Activated CD4-positive, alpha-beta T cell treated with anti-CD3 and anti-CD28 coated beads, Interleukin-2, amount 10 ng/mL, durations not matched to agents 24 days and 14 days (primary cell): ENCODE measurements at regions of chr11 and their contacts with region 1.

Region 1: DNA sequence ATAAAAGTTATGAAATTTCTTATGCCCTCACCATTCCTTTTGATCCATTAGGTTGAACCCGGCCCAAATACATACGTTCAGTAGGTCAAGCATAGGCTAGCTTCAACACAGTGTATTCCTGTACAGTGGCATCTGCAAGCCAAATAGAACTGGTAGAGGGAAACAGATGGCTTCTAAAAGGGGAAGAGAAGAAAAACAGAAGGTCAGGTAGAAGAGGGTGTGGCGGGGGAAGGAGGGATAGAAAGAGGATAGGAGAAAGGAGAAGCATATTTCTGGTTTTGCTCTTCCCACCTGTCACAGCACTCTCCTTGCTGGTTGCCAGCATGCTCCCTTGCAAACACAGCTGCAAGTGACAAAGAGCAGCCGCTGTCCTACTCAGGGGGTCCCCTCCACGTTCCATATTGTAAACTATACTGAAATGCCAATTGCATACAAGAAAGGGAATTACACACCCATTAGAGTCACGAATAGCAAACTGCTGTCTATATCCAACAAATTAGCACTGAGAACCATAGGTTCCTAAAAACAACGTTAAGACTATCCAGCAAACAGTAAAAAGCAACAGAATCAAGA is 71.8 kb downstream of the PHF21A start:
- DNase-seq: no peak
- H3K4me3 Mint-ChIP-seq: no peak overlapping the region
- H3K27ac Mint-ChIP-seq: no peak overlapping the region
- H3K4me1 Mint-ChIP-seq: peaks cover 3% of the 10 kb centered on the region
- H3K27me3 Mint-ChIP-seq: no peaks in the 10 kb centered on the region

Region 2: DNA sequence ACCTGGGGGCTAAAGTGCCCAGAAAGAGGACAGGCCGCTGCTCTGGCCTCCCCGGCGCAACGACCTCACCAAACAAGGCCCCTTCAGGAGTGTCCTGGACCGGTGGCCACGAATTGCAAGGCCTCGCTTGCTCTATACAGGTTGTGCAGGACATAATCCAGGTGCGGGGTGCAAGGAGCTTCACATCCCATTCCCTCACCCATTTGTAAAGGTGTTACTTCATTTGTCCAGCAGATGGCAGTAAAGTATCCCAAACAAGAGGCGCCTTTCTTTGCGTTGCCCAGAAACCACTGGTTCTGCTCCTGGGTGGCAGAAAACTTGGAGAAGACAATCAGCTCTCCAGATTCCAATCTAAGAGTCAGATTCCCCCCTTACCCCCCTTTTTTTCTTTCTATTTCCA is 938.8 kb before region 1 on chr11:
- intact Hi-C with region 1: no loop called
- DNase-seq: peak; percentile 86
- H3K4me3 Mint-ChIP-seq: no peak overlapping the region
- H3K27ac Mint-ChIP-seq: no peak overlapping the region
- H3K4me1 Mint-ChIP-seq: no peaks in the 10 kb centered on the region
- H3K27me3 Mint-ChIP-seq: peaks cover 24% of the 10 kb centered on the region

Region 3: GRCh38 chr11:46026606-46027293 is 22.7 kb before region 1 on chr11:
- intact Hi-C with region 1: no loop called
- DNase-seq: no peak
- H3K4me3 Mint-ChIP-seq: no peak overlapping the region
- H3K27ac Mint-ChIP-seq: no peak overlapping the region
- H3K4me1 Mint-ChIP-seq: no peaks in the 10 kb centered on the region
- H3K27me3 Mint-ChIP-seq: no peaks in the 10 kb centered on the region

Region 4: DNA sequence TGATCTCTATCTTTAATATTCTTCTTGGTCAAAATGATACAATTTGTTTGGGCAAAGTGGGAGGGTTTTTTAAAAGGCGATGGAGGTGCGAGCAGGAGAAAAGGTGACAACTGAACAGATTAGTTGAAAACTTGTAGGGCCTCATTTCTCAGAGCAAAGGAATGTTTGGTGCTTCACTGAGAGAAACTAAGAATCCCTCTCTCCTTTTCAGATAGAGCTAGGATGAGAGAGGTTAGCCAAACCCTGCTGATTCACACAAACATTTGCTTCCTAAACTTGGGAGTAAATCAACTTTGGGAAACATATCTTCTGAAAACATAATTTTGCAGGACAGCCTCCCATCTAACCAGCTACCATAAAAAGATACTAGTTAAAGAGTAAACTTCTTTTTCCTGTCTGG is 14.8 kb after region 1 on chr11:
- intact Hi-C with region 1: no loop called
- DNase-seq: no peak
- H3K4me3 Mint-ChIP-seq: no peak overlapping the region
- H3K27ac Mint-ChIP-seq: no peak overlapping the region
- H3K4me1 Mint-ChIP-seq: no peaks in the 10 kb centered on the region
- H3K27me3 Mint-ChIP-seq: no peaks in the 10 kb centered on the region

Region 5: GRCh38 chr11:46100670-46101069 is 51.3 kb after region 1 on chr11:
- intact Hi-C with region 1: loop called (anchors 5 kb)
- DNase-seq: no peak
- H3K4me3 Mint-ChIP-seq: peak overlapping the region; percentile 64
- H3K27ac Mint-ChIP-seq: no peak overlapping the region
- H3K4me1 Mint-ChIP-seq: peaks cover 37% of the 10 kb centered on the region
- H3K27me3 Mint-ChIP-seq: no peaks in the 10 kb centered on the region

Region 6: GRCh38 chr11:46112961-46113617 is 63.7 kb after region 1 on chr11:
- intact Hi-C with region 1: no loop called
- DNase-seq: peak; percentile 78
- H3K4me3 Mint-ChIP-seq: no peak overlapping the region
- H3K27ac Mint-ChIP-seq: no peak overlapping the region
- H3K4me1 Mint-ChIP-seq: peaks cover 37% of the 10 kb centered on the region
- H3K27me3 Mint-ChIP-seq: no peaks in the 10 kb centered on the region